Naive thymus-derived CD8-positive, alpha-beta T cell (primary cell): ENCODE measurements at regions of chr16 and their contacts with region 1.

Region 1: GRCh38 chr16:70345840-70346239 is 863 bp upstream of the DDX19A start:
- DNase-seq: no peak
- ATAC-seq: no peak
- H3K4me3 Mint-ChIP-seq: peak overlapping the region; percentile 77 to 98 (median 94)
- H3K27ac Mint-ChIP-seq: peak overlapping the region; percentile 89 to 100 (median 98)
- H3K4me1 Mint-ChIP-seq: peaks cover 15 to 38% (median 29%) of the 10 kb centered on the region in 4 donors
- H3K27me3 Mint-ChIP-seq: no peaks in the 10 kb centered on the region

Region 2: GRCh38 chr16:70251629-70252354 is 94.0 kb before region 1 on chr16 and contains the start of gene EXOSC6:
- POLR2A ChIA-PET with region 1: interaction called, 10 read pairs
- DNase-seq: peak; percentile 86 to 95 (median 90)
- ATAC-seq: peak; percentile 89 to 92
- H3K4me3 Mint-ChIP-seq: peak within 1 kb of the TSS; percentile 83 to 95 (median 91)
- H3K27ac Mint-ChIP-seq: peak within 1 kb of the TSS; percentile 90 to 98 (median 95)
- H3K4me1 Mint-ChIP-seq: peaks cover 4 to 28% (median 16%) of the 10 kb centered on the region in 4 donors
- H3K27me3 Mint-ChIP-seq: no peaks in the 10 kb centered on the region
- polyA plus RNA-seq, gene EXOSC6: 8.0 to 18.0 (median 16.5) TPM

Region 3: DNA sequence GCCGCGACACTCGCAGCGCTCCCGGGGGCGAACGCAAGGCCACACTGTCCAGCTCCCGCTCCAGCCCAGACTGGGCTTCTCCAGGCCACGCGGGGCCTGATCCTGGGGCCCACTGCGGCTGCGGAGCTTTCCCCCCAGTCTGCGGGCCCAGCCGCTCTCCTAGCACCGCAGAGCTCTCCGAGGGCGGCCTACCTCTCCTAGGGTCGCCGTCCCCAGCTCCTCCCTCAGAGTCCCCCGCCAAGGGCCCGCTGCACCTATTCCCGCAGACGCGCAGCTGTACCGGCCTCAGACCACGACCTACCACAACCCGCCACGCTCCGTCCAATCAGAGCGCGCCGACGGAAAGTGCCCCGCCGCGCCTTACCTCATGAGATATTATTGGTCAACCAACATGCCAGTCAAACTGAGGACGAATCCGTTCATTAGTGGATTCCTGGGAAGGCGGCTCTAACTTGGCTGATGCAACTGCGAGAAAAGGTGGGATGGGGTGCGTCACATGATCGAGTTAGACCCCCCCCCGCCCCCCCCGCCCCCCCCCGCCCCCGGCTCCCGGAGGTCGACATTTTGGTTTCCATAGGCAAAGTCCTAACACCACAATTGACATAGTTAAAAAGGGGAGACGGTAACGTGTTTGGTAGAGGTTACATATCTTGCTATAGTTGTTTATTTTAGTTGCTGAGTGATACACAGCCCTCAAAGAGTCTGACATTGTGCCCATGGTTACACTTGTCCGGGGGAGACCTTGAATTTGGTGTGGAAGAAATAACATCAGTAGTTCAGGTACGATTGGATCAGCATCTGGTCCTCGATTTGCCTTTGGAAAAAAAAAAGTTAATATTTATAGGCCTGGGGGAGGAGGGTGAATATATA is 56.4 kb before region 1 on chr16 and contains the start of gene AARS1:
- POLR2A ChIA-PET with region 1: interaction called, 23 read pairs
- DNase-seq: peak; percentile 86 to 98 (median 96)
- ATAC-seq: peak; percentile 95 to 97
- H3K4me3 Mint-ChIP-seq: peak within 1 kb of the TSS; percentile 93 to 100 (median 99)
- H3K27ac Mint-ChIP-seq: peak within 1 kb of the TSS; percentile 94 to 100 (median 98)
- H3K4me1 Mint-ChIP-seq: peaks cover 8 to 28% (median 21%) of the 10 kb centered on the region in 4 donors
- H3K27me3 Mint-ChIP-seq: peaks cover 0 to 2% (median 0%) of the 10 kb centered on the region in 5 donors
- polyA plus RNA-seq, gene AARS1: 22.9 to 45.6 (median 37.8) TPM

Region 4: GRCh38 chr16:70298988-70299938 is 46.6 kb before region 1 on chr16 and contains the start of gene DDX19B:
- POLR2A ChIA-PET with region 1: interaction called, 42 read pairs
- DNase-seq: peak; percentile 33 to 76 (median 52)
- ATAC-seq: peak; percentile 86 to 91
- H3K4me3 Mint-ChIP-seq: peak within 1 kb of the TSS; percentile 89 to 98 (median 94)
- H3K27ac Mint-ChIP-seq: peak within 1 kb of the TSS; percentile 97 to 100 (median 99)
- H3K4me1 Mint-ChIP-seq: peaks cover 17 to 45% (median 42%) of the 10 kb centered on the region in 4 donors
- H3K27me3 Mint-ChIP-seq: no peaks in the 10 kb centered on the region
- polyA plus RNA-seq, gene DDX19B: 34.5 to 48.2 (median 40.0) TPM

Region 5: GRCh38 chr16:70392606-70393005 is 46.8 kb after region 1 on chr16:
- POLR2A ChIA-PET with region 1: no interaction called
- DNase-seq: no peak
- ATAC-seq: no peak
- H3K4me3 Mint-ChIP-seq: no peak overlapping the region
- H3K27ac Mint-ChIP-seq: peak overlapping the region in 1 of 10 donors; percentile 57
- H3K4me1 Mint-ChIP-seq: peaks cover 0 to 5% (median 3%) of the 10 kb centered on the region in 4 donors
- H3K27me3 Mint-ChIP-seq: no peaks in the 10 kb centered on the region

Region 6: GRCh38 chr16:70454222-70455034 is 108.6 kb after region 1 on chr16 and contains the start of gene FCSK:
- POLR2A ChIA-PET with region 1: interaction called, 16 read pairs
- DNase-seq: peak; percentile 53 to 94 (median 72)
- ATAC-seq: peak; percentile 92 to 93
- H3K4me3 Mint-ChIP-seq: peak within 1 kb of the TSS; percentile 86 to 96 (median 93)
- H3K27ac Mint-ChIP-seq: peak within 1 kb of the TSS; percentile 88 to 95 (median 92)
- H3K4me1 Mint-ChIP-seq: peaks cover 6 to 40% (median 23%) of the 10 kb centered on the region in 4 donors
- H3K27me3 Mint-ChIP-seq: no peaks in the 10 kb centered on the region
- polyA plus RNA-seq, gene FCSK: 4.5 to 9.6 (median 9.3) TPM

Region 7: GRCh38 chr16:70523076-70523742 is 177.4 kb after region 1 on chr16 and contains the start of gene COG4:
- POLR2A ChIA-PET with region 1: interaction called, 12 read pairs
- DNase-seq: peak; percentile 84 to 95 (median 90)
- ATAC-seq: peak; percentile 80 to 81
- H3K4me3 Mint-ChIP-seq: peak within 1 kb of the TSS; percentile 94 to 100 (median 98)
- H3K27ac Mint-ChIP-seq: peak within 1 kb of the TSS; percentile 96 to 100 (median 99)
- H3K4me1 Mint-ChIP-seq: peaks cover 19 to 69% (median 57%) of the 10 kb centered on the region in 4 donors
- H3K27me3 Mint-ChIP-seq: no peaks in the 10 kb centered on the region
- polyA plus RNA-seq, gene COG4: 52.4 to 58.6 (median 52.8) TPM